ENCODE measurements at regions of chr10 and their contacts with region 1.

Region 1: GRCh38 chr10:115239761-115240160 is 146.6 kb downstream of the ATRNL1 start:
- DNase-seq: no peak

Region 2: DNA sequence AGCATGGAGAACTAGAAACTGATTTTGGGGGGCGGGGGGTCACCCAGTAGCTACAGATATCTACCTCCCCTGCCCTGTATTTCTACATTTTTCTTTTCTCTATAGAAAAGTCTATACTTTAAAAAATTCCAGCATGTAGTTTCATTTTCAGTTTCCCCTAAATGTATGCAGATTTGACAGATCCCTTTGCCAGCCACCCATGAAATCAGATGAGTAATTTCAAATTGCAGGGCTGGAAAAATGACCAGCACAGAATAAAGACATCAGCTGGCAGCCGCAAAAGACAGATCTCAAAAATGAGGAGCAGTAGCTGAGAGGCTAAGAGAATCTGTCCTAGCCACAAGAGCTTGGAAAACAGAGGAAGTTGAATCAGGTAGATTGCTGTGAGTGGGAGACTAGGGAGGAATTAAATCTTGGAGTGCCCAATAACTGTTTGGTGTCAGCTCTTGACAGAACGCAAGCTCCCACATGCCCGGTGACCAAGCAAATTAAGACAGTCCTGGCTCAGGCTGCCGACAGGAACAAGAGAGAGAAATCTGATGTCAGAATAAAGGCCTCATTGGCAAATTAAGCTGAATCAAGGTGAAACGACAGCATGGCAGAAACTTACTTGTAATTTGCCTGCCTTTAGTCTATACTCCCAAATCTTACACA is 1171.6 kb before region 1 on chr10:
- intact Hi-C with region 1: no loop called
- DNase-seq: no peak

Region 3: GRCh38 chr10:115402690-115403089 is 162.9 kb after region 1 on chr10:
- intact Hi-C with region 1: no loop called
- DNase-seq: no peak

Region 4: GRCh38 chr10:116490028-116490662 is 1250.4 kb after region 1 on chr10:
- intact Hi-C with region 1: loop called in 1 of 2 experiments (anchors 5 kb)
- DNase-seq: no peak